ENCODE measurements at regions of chr13 and their contacts with region 1.

Region 1: DNA sequence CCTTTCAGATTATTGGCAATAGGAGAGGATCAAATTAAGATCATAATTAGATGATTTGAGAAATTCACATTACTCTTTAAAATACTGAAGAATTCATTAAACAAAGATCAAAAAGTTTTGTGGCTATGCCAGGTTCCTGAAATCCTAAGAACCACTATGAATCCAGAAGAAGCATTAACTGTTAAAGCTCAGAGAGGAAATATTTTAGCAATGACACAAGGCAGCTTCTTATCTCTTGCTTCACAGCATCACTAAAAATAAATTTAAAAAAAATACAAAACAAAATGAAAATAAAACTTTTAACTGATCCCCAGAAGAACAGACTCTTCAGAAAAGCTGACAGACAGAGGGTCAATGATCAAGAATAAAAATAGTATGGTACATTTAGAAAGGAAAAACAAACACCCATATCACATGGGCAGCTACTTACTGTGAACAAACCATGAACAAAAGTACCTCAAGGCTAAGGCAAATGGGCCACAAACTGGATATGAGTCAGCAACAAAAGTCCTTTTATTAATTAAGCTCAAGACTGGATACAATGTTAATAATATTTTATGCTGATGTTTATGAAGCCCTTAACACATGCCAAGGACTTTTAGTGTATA is 19.6 kb downstream of the RNF6 start:
- DNase-seq: no peak
- ATAC-seq: peak in 1 of 4 donors; percentile 47
- H3K4me3 ChIP-seq: no peak overlapping the region
- H3K27ac ChIP-seq: peak overlapping the region; percentile 39
- H3K4me1 ChIP-seq: peaks cover 12% of the 10 kb centered on the region
- H3K27me3 ChIP-seq: no peaks in the 10 kb centered on the region
- CTCF ChIP-seq: no peak

Region 2: GRCh38 chr13:26557393-26558023 is 355.0 kb after region 1 on chr13 and contains the start of gene WASF3:
- intact Hi-C with region 1: loop called in 1 of 2 experiments (anchors 5 kb)
- DNase-seq: peak; percentile 95 to 97
- ATAC-seq: peak; percentile 99
- H3K4me3 ChIP-seq: peak within 1 kb of the TSS; percentile 82
- H3K27ac ChIP-seq: peak within 1 kb of the TSS; percentile 58
- H3K4me1 ChIP-seq: peaks cover 6% of the 10 kb centered on the region
- H3K27me3 ChIP-seq: no peaks in the 10 kb centered on the region
- CTCF ChIP-seq: no peak
- total RNA-seq, gene WASF3: 6.8 to 9.7 (median 7.6) TPM